ENCODE measurements at regions of chr2 and their contacts with region 1.

Region 1: DNA sequence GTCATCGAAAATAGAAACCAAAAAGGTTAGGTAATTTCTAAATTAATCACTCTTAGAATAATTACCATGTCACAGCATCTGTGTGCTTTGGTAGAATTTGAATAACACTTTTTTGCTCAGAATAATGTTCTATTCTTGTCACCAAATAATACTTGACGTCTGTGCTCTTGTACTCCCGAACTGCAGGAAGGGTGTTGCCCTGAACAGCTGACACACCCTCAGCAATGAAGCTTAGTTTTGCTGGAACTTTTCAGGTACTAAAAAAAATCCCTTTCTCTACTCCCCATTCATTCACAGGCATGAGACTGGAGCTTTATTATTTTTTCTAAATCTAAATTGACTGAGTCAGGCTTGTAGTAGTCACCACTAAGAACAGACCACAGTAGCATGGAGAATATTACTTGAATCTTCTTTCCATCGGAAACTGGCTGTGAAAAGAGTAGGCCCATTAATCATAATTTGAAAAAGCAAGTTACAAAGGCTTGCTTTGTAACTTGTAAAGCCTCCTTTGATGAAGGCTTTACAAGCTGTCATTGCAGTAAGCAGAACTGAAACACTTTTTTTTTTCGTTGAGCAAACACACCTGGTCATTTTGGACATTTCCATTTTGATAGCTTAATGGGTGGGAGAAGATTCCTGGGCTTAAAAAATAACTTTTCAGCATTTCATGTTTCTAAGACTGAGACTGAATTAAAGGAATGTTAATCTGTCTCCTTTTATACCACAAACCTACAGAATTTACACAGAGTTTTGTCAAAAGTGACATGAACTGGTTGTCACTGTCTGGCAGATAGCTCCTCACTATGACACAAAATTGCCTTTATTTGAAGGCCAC is 70.3 kb upstream of the PELI1 start:
- DNase-seq: peak; percentile 80
- H3K4me3 Mint-ChIP-seq: peak overlapping the region; percentile 74
- H3K27ac Mint-ChIP-seq: peak overlapping the region; percentile 97
- H3K4me1 Mint-ChIP-seq: peaks cover 41% of the 10 kb centered on the region
- H3K27me3 Mint-ChIP-seq: no peaks in the 10 kb centered on the region

Region 2: GRCh38 chr2:64036034-64036705 is 178.3 kb before region 1 on chr2:
- intact Hi-C with region 1: loop called (anchors 1 kb)
- DNase-seq: peak; percentile 82
- H3K4me3 Mint-ChIP-seq: peak overlapping the region; percentile 22
- H3K27ac Mint-ChIP-seq: peak overlapping the region; percentile 76
- H3K4me1 Mint-ChIP-seq: peaks cover 42% of the 10 kb centered on the region
- H3K27me3 Mint-ChIP-seq: no peaks in the 10 kb centered on the region

Region 3: GRCh38 chr2:64114063-64114911 is 100.2 kb before region 1 on chr2:
- intact Hi-C with region 1: loop called (anchors 1 kb)
- DNase-seq: peak; percentile 74
- H3K4me3 Mint-ChIP-seq: peak overlapping the region; percentile 66
- H3K27ac Mint-ChIP-seq: peak overlapping the region; percentile 86
- H3K4me1 Mint-ChIP-seq: peaks cover 50% of the 10 kb centered on the region
- H3K27me3 Mint-ChIP-seq: no peaks in the 10 kb centered on the region

Region 4: GRCh38 chr2:64144057-64145013 is 70.2 kb before region 1 on chr2 and contains the start of gene PELI1:
- intact Hi-C with region 1: loop called (anchors 1 kb)
- DNase-seq: peak; percentile 97
- H3K4me3 Mint-ChIP-seq: peak within 1 kb of the TSS; percentile 99
- H3K27ac Mint-ChIP-seq: peak within 1 kb of the TSS; percentile 96
- H3K4me1 Mint-ChIP-seq: peaks cover 19% of the 10 kb centered on the region
- H3K27me3 Mint-ChIP-seq: no peaks in the 10 kb centered on the region
- total RNA-seq, gene PELI1: 31.9 and 33.8 TPM in 2 replicates

Region 5: DNA sequence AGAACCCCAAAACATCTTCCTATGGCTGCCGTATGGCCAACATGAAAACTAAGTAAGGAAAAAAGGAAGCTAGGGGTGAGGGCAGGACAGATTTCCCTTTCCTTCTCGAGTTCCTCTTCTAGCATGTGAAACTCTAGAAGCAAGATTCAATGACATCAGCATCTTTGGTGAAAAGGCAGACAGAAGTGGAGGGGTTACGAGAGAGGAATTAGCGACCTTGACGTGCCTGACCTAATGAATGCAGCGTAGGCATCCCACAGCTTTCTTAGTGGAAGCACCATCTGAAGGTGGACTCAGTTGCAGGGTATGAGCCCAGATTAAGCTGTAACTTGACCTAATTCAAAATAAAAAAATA is 22.4 kb before region 1 on chr2:
- intact Hi-C with region 1: no loop called
- DNase-seq: no peak
- H3K4me3 Mint-ChIP-seq: no peak overlapping the region
- H3K27ac Mint-ChIP-seq: no peak overlapping the region
- H3K4me1 Mint-ChIP-seq: peaks cover 24% of the 10 kb centered on the region
- H3K27me3 Mint-ChIP-seq: peaks cover 3% of the 10 kb centered on the region

Region 6: GRCh38 chr2:64203858-64204632 is 10.5 kb before region 1 on chr2:
- intact Hi-C with region 1: loop called (anchors 1 kb)
- DNase-seq: peak; percentile 84
- H3K4me3 Mint-ChIP-seq: peak overlapping the region; percentile 75
- H3K27ac Mint-ChIP-seq: peak overlapping the region; percentile 75
- H3K4me1 Mint-ChIP-seq: peaks cover 71% of the 10 kb centered on the region
- H3K27me3 Mint-ChIP-seq: no peaks in the 10 kb centered on the region

Region 7: DNA sequence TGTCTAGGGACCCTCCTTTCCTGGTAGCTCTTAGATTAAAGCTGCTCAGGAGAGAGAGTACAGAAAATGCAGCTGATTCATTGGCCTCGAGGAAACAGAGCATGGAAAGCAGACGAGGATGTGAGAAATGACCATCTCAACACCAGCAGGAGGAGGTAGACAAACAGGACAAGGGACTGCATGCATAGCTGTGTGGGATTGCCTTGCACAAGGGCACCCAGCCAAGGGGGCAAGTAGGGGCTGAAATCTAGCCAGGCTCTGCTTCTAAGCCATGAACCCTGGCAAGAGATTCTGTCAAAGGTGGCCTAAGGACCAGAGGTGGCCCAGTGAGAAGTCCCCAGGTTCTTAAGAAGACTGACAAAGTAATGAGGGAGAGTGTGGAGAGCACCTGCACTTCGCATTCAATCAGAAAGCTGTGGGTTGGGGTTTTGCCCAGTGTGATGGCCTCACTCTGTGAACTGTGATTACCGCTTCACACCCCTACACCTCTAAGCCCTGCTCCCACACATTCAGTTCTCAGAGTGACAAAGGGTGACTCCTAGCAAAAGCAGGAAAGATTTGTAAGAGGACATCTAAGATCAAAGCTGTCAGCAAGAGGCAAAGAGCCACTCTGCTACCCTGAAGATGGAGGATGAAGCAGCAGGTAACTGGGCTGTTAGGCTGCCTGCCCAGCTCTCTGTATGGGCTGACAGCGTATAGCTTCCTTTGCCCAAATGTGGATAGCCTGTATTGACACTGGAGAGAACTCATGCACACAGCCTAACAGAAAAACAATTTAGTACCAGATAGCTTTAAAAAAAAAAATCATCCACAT is 81.0 kb after region 1 on chr2:
- intact Hi-C with region 1: loop called (anchors 1 kb)
- DNase-seq: no peak
- H3K4me3 Mint-ChIP-seq: peak overlapping the region; percentile 33
- H3K27ac Mint-ChIP-seq: peak overlapping the region; percentile 82
- H3K4me1 Mint-ChIP-seq: peaks cover 19% of the 10 kb centered on the region
- H3K27me3 Mint-ChIP-seq: peaks cover 19% of the 10 kb centered on the region